ENCODE measurements at regions of chr17 and their contacts with region 1.

Region 1: DNA sequence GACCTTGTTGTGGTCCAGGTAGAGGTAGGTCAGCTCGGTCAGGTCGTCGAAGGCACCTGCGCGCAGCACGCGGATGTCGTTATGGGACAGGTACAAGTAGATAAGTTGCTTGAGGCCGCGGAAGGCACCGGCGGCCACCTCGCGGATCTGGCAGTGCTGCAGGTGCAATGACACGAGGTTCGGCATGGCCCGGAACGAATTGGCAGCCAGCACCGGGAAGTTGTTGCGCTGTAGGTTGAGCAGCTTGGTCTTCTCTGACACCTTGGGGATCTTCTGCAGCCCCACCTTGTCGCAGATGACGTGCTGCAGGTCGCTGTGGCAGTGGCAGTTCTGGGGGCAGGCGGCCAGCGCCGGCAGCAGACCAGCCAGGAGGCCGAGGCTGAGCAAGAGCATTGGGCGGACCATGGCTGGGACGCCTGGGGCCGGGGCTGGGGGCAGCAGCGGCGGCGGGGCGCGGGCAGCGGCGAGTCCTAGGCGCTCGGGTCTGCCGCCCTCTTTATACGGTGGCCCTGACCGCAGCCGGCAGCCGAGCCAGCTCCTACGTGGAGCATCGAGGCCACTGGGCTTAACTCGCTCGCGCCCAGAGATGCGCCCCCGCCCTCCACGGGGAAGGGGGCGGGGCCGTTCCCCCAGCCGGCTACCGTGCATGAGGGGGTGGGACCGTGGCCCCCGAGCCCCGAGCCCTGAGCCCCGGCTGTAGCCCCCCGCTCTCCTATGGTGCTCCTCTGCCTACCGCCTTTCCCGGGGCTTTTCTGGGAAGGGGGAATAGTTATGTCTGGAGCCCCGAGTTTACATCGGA is at the start of gene CHAD:
- DNase-seq: peak; percentile 43 to 61
- ATAC-seq: peak; percentile 35 to 45 (median 36)
- H3K4me3 ChIP-seq: peak within 1 kb of the TSS; percentile 65
- H3K27ac ChIP-seq: peak within 1 kb of the TSS; percentile 71
- H3K4me1 ChIP-seq: peaks cover 42% of the 10 kb centered on the region
- H3K27me3 ChIP-seq: no peaks in the 10 kb centered on the region
- CTCF ChIP-seq: no peak
- total RNA-seq, gene CHAD: 0.32 to 0.76 (median 0.44) TPM in 3 of 4 donors, not detected in the other

Region 2: DNA sequence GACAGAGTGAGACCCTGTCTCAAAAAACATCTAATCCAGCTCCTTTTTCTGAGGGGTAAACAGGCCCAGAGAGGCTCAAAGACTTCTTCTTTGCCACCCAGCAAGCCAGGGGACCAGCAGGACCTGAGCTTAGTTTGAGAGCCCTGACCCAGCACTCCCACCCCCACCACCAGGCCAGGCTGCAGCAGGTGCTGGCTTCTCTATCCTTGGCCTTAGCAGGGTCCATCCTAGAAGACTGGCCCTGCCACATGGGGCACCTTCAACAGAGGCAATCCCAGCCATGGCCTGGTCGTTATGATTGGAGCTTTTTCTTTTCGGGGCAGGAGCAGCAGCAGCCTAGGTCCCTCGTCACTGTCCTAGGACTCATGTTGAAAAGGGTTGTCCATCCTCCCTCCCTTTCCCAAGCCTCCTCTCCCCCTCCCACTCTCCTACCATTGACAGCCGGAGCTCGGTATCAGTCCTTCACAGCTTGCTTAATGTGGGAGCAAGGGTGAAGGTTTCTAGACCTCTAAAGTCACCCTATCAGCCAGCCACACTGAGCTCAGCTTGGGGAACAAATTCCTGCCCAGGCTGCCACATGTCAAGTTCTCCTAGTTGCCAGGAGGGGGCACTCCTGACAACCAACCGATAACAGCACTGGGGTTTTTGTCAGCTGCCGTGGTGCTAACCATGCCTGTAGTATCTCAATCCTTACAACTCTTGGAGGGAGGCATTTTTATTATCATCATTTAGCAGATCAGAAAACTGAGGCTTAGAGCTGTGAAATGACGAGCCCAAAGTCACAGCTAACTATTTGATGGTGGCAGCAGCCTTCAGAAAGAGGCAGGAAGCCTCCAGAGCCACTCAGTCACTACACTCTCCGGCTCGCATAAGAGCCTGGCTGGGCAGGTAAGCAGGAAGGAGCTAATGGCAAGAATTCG is 106.8 kb before region 1 on chr17:
- intact Hi-C with region 1: loop called (anchors 2 to 5 kb)
- DNase-seq: peak; percentile 47 to 68
- ATAC-seq: peak; percentile 69 to 83 (median 79)
- H3K4me3 ChIP-seq: no peak overlapping the region
- H3K27ac ChIP-seq: no peak overlapping the region
- H3K4me1 ChIP-seq: peaks cover 5% of the 10 kb centered on the region
- H3K27me3 ChIP-seq: no peaks in the 10 kb centered on the region
- CTCF ChIP-seq: peak; percentile 68

Region 3: DNA sequence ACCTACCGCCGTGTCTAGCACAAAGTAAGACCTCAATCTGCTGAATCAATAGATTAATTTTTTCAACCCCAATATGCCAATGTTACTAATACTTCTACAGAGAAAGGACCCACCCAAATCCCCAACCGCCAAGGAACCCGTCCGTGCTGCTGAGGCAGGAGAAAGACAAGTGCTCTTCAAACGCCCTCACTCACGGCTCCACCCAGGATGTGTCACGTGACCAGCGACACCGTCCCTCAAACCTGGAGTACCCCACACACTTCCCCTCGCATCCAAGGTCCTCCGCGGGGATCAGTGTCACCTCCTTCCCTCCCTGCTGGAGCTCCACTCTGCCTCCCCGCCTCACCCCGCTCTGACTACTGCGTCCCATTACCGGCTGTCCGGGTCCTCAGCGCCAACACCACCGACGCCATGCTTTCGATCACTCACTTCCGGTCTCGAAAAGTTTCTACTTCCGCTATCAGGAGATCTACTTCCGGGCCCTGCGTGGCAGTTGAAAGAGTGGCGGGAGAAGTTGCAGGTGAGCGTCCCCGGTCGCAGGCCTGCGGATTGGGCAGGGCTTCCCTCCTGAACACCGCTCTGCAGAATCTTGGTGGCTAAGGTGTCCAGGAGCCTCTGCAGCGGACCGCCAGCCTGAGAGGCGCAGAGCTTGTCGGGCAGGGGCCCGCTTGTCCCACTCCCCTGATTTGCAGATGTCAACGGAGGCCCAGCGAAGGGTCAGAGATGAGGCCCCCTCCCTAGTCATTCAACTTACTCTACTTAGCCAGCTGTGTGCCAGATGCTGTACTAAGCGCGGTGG is 95.7 kb before region 1 on chr17 and contains the starts of genes EME1 and MRPL27:
- intact Hi-C with region 1: no loop called
- DNase-seq: peak; percentile 86 to 91
- ATAC-seq: peak; percentile 91 to 98 (median 96)
- H3K4me3 ChIP-seq: peak within 1 kb of the TSS; percentile 89
- H3K27ac ChIP-seq: peak within 1 kb of the TSS; percentile 99
- H3K4me1 ChIP-seq: peaks cover 15% of the 10 kb centered on the region
- H3K27me3 ChIP-seq: no peaks in the 10 kb centered on the region
- CTCF ChIP-seq: no peak
- total RNA-seq, gene EME1: 0.15 to 0.32 TPM in 2 of 4 donors, not detected in the others
- total RNA-seq, gene MRPL27: 70.7 to 133 (median 95.3) TPM

Region 4: GRCh38 chr17:50425682-50426471 is 42.7 kb before region 1 on chr17 and contains the start of gene ACSF2:
- intact Hi-C with region 1: loop called in 1 of 2 experiments (anchors 5 kb)
- DNase-seq: peak; percentile 82 to 88
- ATAC-seq: peak; percentile 64 to 85 (median 78)
- H3K4me3 ChIP-seq: peak within 1 kb of the TSS; percentile 86
- H3K27ac ChIP-seq: peak within 1 kb of the TSS; percentile 83
- H3K4me1 ChIP-seq: peaks cover 38% of the 10 kb centered on the region
- H3K27me3 ChIP-seq: no peaks in the 10 kb centered on the region
- CTCF ChIP-seq: no peak
- total RNA-seq, gene ACSF2: 14.4 to 72.3 (median 44.7) TPM